ENCODE measurements at regions of chr9 and their contacts with region 1.

Region 1: DNA sequence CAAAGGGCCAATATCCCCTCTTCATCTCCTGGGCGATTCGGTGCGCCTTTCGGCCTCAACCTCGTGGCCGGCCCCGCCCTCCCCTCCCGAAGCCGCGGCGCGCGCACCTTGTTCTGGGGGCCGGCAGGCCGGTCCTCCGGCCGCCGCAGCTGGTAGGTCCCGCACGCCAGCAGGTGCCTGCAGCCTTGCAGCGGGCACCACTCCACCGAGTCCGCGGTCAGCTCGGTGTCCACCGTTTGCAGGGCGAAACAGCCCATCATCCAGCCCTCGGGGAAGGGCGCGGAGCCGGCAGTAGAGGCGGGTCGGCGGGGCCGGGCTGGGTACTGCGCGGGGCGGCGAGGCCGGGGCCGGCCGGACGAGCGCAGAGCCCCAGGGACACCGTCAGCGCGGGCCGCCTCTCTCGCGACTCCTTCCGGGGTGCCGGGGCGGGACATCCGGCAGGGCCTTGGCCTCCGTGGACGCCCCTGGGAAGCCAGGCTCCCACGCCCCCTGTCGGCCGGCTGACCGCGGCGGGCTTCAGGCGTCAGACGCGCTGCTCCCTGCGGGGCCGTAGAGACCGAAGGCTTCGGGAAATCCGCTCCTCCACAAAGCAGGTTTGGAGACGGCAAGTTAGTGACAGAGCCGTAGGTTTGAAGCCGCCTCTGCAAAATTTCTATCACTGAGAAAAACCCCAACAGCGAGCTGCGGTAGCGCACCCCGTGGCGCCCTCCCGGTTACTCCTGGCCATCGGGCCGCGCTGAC is at the start of gene DPH7:
- DNase-seq: peak; percentile 96
- ATAC-seq: peak; percentile 83
- H3K4me3 Mint-ChIP-seq: peak within 1 kb of the TSS; percentile 80
- H3K27ac Mint-ChIP-seq: peak within 1 kb of the TSS; percentile 36
- H3K4me1 Mint-ChIP-seq: peaks cover 28% of the 10 kb centered on the region
- H3K27me3 Mint-ChIP-seq: no peaks in the 10 kb centered on the region
- CTCF ChIP-seq: peak; percentile 75
- total RNA-seq, gene DPH7: 40.3 to 43.9 TPM (median 40.5 TPM) in 3 replicates

Region 2: DNA sequence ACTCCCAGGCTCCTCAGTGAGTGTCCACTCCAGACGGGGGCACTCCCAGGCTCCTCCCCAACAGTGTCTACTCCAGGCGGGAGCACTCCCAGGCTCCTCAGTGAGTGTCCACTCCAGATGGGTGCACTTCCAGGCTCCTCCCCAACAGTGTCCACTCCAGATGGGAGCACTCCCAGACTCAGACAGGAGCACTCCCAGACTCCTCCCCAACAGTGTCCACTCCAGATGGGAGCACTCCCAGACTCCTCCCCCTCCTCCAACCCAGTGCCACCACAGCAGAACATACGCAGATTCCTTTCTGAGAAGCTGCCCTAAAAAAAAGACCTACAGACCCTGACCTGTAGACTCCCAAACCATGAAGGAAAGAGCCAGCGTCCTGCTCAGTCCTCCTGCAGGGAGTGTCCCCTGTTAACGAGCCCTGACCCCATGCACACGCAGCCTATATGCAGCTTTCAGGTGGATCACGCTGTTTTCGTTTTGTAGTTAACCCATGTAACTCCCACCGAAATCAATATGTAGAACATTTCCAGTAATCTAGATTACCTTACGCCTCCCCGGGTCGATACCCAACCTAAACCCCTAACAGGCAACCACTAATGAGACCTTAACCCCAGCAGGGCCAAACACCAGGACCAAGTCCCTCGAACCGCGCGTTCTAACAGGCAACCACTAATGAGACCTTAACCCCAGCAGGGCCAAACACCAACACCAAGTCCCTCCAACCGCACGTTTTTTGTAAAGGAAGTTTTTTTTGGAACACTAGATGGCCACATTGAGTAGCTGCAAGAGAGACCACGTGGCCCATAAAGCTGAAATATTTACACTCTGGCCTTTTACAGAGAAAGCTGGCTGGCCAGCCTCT is 44.2 kb before region 1 on chr9:
- CTCF ChIA-PET with region 1: no interaction called
- POLR2A ChIA-PET with region 1: no interaction called
- DNase-seq: no peak
- ATAC-seq: peak; percentile 89
- H3K4me3 Mint-ChIP-seq: no peak overlapping the region
- H3K27ac Mint-ChIP-seq: no peak overlapping the region
- H3K4me1 Mint-ChIP-seq: peaks cover 6% of the 10 kb centered on the region
- H3K27me3 Mint-ChIP-seq: peaks cover 7% of the 10 kb centered on the region; the same call in 1 of the 2 replicates
- CTCF ChIP-seq: no peak

Region 3: GRCh38 chr9:137551651-137552384 is 26.9 kb before region 1 on chr9 and contains the start of gene MRPL41:
- CTCF ChIA-PET with region 1: interaction called, 22 read pairs
- POLR2A ChIA-PET with region 1: no interaction called
- DNase-seq: peak; percentile 90
- ATAC-seq: peak; percentile 85
- H3K4me3 Mint-ChIP-seq: peak within 1 kb of the TSS; percentile 87
- H3K27ac Mint-ChIP-seq: peak within 1 kb of the TSS; percentile 88
- H3K4me1 Mint-ChIP-seq: peaks cover 7% of the 10 kb centered on the region
- H3K27me3 Mint-ChIP-seq: no peaks in the 10 kb centered on the region; the same call in 1 of the 2 replicates
- CTCF ChIP-seq: no peak
- total RNA-seq, gene MRPL41: 70.1 to 79.4 TPM (median 74.8 TPM) in 3 replicates

Region 4: GRCh38 chr9:137590462-137591383 is 12.0 kb after region 1 on chr9 and contains the start of gene ZMYND19:
- CTCF ChIA-PET with region 1: interaction called, 51 read pairs
- POLR2A ChIA-PET with region 1: interaction called, 7 read pairs
- DNase-seq: peak; percentile 88
- ATAC-seq: peak; percentile 94
- H3K4me3 Mint-ChIP-seq: peak within 1 kb of the TSS; percentile 97
- H3K27ac Mint-ChIP-seq: peak within 1 kb of the TSS; percentile 99
- H3K4me1 Mint-ChIP-seq: peaks cover 5% of the 10 kb centered on the region; the same call in 1 of the 2 replicates
- H3K27me3 Mint-ChIP-seq: peaks cover 8% of the 10 kb centered on the region
- CTCF ChIP-seq: no peak
- total RNA-seq, gene ZMYND19: 61.9 to 77.9 TPM (median 63.8 TPM) in 3 replicates

Region 5: GRCh38 chr9:137618105-137619067 is 39.7 kb after region 1 on chr9 and contains the start of gene EHMT1:
- CTCF ChIA-PET with region 1: interaction called, 11 read pairs
- POLR2A ChIA-PET with region 1: interaction called, 3 read pairs
- DNase-seq: peak; percentile 87
- ATAC-seq: peak; percentile 78
- H3K4me3 Mint-ChIP-seq: peak within 1 kb of the TSS; percentile 93
- H3K27ac Mint-ChIP-seq: peak within 1 kb of the TSS; percentile 89
- H3K4me1 Mint-ChIP-seq: peaks cover 27% of the 10 kb centered on the region
- H3K27me3 Mint-ChIP-seq: no peaks in the 10 kb centered on the region
- CTCF ChIP-seq: no peak
- total RNA-seq, gene EHMT1: 152 to 170 TPM (median 154 TPM) in 3 replicates

Region 6: DNA sequence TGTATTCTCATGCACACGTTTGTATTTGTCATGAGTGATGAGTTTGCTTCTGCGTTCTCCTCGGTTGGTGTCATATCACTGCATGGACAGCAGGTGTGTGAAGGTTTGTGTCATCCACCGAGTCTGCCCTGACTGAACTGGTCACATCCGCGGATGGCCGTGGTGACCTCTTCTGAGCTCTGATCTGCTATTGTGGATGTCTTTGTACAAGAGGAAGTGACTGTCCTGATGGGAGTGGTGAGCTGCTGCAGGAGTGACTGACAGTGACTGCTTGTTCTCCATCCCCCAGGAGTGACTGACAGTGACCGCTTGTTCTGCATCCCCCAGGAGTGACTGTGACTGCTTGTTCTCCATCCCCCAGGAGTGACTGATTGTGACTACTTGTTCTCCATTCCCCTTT is 110.0 kb after region 1 on chr9:
- CTCF ChIA-PET with region 1: no interaction called
- POLR2A ChIA-PET with region 1: no interaction called
- DNase-seq: no peak
- ATAC-seq: no peak
- H3K4me3 Mint-ChIP-seq: no peak overlapping the region
- H3K27ac Mint-ChIP-seq: no peak overlapping the region; the same call in 1 of the 2 replicates
- H3K4me1 Mint-ChIP-seq: peaks cover 74% of the 10 kb centered on the region
- H3K27me3 Mint-ChIP-seq: no peaks in the 10 kb centered on the region
- CTCF ChIP-seq: no peak